ENCODE measurements at regions of chr4 and their contacts with region 1.

Region 1: DNA sequence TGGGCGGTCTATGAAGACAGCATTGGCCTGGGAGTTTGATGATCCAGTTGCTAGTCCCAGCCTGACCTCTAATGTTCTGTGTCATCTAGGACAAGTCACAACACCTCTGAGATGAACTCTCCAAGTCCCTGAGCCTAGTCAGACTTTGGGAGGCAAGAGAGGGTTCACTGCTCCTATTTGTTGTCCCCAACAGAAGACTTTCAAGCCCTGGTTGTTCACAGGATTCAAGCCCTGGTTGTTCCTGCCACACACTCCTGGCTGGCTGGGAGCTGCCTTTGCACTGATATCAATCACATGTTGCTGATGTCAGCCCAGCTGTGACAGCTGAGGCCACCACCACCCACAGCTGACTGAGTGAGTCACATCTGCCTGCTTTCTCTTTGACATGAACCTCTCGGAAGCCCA is 253.2 kb upstream of the RASGEF1B start:
- DNase-seq: peak in 9 of 10 donors; percentile 48 to 82 (median 68)
- H3K4me3 ChIP-seq: peak overlapping the region in 21 of 59 donors; percentile 2 to 45 (median 23)
- H3K27ac ChIP-seq: peak overlapping the region in 56 of 59 donors; percentile 1 to 87 (median 73)
- H3K27me3 ChIP-seq: peaks cover 0 to 2% (median 0%) of the 10 kb centered on the region in 45 donors
- CTCF ChIP-seq: peak in 21 of 56 donors; percentile 7 to 55 (median 25)

Region 2: DNA sequence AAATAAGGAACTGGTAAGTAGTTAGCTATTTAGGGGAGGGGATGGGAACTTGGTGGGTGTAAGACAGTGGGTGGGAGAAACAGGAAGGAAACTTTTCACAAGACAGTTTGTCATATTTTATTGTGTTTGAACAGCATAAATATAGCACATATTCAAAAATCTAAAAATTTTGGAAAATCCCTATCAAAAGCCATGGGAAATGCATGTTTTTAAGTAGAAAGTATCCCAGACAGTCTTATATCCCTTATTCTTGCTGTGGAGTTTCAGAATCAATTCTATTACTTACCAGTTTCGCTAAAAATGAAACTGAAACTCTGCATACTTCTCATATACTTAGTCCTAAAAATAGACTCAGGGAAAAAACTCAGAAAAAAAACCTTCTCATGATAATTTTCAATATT is 230.9 kb before region 1 on chr4:
- intact Hi-C with region 1: no loop called
- DNase-seq: no peak
- H3K4me3 ChIP-seq: peak overlapping the region in 10 of 59 donors; percentile 1 to 26 (median 4)
- H3K27ac ChIP-seq: peak overlapping the region in 8 of 59 donors; percentile 5 to 57 (median 26)
- H3K27me3 ChIP-seq: no peaks in the 10 kb centered on the region
- CTCF ChIP-seq: no peak

Region 3: GRCh38 chr4:81527115-81527514 is 197.8 kb before region 1 on chr4:
- intact Hi-C with region 1: no loop called
- DNase-seq: peak in 2 of 10 donors; percentile 45 to 46
- H3K4me3 ChIP-seq: no peak overlapping the region
- H3K27ac ChIP-seq: no peak overlapping the region
- H3K27me3 ChIP-seq: no peaks in the 10 kb centered on the region
- CTCF ChIP-seq: no peak

Region 4: GRCh38 chr4:81808011-81808672 is 83.2 kb after region 1 on chr4:
- intact Hi-C with region 1: no loop called
- DNase-seq: peak in 1 of 10 donors; percentile 96
- H3K4me3 ChIP-seq: no peak overlapping the region
- H3K27ac ChIP-seq: no peak overlapping the region
- H3K27me3 ChIP-seq: no peaks in the 10 kb centered on the region
- CTCF ChIP-seq: no peak

Region 5: DNA sequence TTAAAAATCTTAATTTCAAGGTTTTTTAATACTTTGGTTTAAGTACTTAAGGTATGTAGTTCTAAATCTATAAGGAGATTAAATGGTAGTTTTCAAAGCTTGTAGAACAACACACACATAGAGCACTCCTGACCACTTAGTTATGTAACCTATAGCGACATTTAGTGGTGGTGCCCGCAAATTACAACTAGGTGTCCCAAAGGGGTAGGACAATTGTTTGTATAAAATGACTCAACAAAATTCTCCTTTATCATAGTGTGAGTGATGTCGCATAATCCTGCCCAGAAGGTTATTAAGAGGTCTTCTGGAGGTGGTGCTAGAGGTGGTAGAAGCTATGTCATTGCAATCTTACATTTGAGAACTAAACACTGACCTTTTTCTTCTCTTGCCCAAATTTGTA is 119.8 kb after region 1 on chr4:
- intact Hi-C with region 1: loop called in 1 of 2 experiments (anchors 10 kb)
- DNase-seq: peak in 8 of 10 donors; percentile 46 to 88 (median 62)
- H3K4me3 ChIP-seq: no peak overlapping the region
- H3K27ac ChIP-seq: no peak overlapping the region
- H3K27me3 ChIP-seq: no peaks in the 10 kb centered on the region
- CTCF ChIP-seq: peak; percentile 63 to 96 (median 85)